ENCODE measurements at regions of chr19 and their contacts with region 1.

Region 1: DNA sequence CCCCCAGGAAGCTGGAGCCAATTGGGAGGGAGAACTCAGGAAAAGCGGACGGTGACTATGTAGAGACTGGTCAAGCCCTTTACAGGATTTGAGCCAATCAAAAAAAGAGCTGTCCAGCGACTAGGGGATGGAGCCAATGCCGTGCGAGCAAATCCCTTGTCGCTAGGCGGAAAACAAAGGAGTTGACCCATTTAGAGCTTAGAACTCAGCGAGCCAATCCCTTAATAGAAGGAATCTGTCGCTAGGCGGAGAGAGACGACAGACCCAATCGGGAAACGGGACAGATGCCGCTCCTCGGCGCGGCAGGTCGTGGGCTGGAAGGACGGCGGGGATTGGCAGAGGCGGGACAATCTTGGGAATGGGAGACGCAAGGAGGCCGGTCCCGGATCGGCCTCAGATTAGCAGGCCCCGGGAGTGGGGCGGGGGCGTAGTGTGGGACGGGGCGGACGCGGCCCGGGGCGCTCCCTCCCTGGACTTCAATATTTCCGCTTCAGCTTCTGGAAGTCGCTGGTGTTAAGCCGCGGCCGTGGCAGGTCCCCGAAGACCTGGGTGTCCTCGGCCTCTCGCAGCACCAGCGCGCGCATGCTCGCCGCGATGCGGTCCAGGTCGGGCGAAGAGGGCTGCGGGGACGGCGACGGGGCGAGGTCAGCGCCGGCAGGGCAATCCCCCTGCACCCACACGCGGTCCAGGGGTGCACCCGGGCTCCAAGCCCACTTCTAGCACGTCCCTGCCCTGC is 2.2 kb upstream of the PNKP start:
- DNase-seq: peak; percentile 98
- H3K4me3 Mint-ChIP-seq: no peak overlapping the region
- H3K27ac Mint-ChIP-seq: no peak overlapping the region
- H3K4me1 Mint-ChIP-seq: peaks cover 41% of the 10 kb centered on the region
- H3K27me3 Mint-ChIP-seq: no peaks in the 10 kb centered on the region

Region 2: DNA sequence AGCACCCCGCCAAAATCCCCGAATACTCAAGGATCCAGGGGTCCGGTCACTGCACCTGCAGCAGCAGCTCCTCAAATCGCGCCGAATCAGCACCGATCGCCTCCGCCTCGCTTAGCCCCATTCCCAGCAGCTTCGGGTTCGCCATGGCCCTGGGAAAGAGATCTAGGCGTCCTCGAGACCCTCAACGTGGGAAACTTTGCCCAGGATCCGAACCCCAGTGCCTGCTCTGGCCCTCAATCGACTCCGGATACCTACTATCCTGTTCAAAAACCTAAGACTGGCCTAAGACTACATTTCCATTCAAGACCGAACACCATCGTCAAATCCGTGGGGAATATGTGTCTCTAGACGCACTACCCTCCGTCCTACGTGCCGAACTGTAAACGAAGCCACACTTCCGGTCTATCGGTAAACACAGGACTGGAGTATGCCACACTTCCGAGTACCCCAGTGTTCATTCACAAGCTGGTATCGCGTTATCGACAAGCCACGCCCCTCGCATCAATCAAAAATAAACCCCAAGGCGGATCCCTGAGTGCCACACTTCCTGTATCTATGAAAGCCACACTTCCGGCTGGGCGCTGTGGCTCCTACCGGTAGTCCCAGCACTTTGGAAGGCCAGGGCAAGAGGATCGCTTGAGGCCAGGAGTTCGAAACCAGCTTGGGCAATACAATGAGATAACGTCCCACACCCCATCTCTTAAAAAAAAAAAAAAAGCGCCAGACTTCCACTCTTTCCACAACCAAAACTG is 418.0 kb before region 1 on chr19 and contains the start of gene PIH1D1:
- intact Hi-C with region 1: no loop called
- DNase-seq: peak; percentile 98
- H3K4me3 Mint-ChIP-seq: peak within 1 kb of the TSS; percentile 91
- H3K27ac Mint-ChIP-seq: peak within 1 kb of the TSS; percentile 100
- H3K4me1 Mint-ChIP-seq: peaks cover 38% of the 10 kb centered on the region
- H3K27me3 Mint-ChIP-seq: no peaks in the 10 kb centered on the region
- total RNA-seq, gene PIH1D1: 134 and 135 TPM in 2 replicates

Region 3: DNA sequence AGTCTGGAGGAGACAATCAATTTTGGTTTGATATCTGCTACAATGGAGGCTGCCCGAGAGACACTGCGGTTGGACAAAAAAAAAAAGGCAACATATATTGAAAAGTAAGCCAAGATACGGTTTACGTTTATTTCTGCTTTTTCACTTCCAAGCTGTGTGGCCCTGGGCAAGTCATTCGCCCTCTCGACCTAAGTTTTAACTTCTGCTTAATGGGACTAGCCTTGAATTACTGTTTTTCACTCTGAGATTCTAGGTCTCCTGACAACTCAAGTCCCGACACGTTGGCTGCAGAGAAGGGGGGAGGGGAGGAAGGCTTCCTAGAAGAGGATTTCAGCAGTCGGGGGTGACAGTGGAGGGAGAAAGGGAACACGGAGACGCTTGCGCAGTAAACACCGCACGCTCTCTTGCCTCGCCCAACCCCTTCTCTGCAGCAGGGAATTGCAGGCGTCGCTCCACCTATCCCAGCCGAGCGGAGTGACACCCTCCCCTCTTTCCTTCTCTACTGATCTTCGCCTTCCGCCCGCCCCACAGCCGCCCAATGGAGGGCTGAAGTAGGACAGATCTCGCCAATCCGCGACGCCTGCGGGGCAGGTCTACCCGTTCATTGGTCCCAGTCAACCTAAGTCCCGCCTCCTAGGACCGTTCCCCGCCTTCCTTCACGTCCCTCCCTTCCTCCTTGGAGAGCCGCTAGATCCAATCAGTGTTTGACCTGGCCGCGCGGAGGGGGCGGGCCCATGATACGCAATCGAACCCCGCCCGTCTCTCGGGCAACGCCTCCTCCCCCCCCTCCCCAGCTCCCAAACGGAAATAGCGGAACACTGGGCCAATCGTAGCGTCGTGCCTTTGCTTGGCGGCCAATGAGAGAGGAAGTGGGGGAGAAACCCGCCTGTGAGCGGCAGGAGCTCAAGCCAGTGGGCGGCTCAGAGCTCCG is 103.3 kb before region 1 on chr19:
- intact Hi-C with region 1: loop called (anchors 2 kb)
- DNase-seq: peak; percentile 100
- H3K4me3 Mint-ChIP-seq: peak overlapping the region; percentile 91
- H3K27ac Mint-ChIP-seq: peak overlapping the region; percentile 92
- H3K4me1 Mint-ChIP-seq: peaks cover 32% of the 10 kb centered on the region
- H3K27me3 Mint-ChIP-seq: no peaks in the 10 kb centered on the region

Region 4: GRCh38 chr19:49850473-49851342 is 18.9 kb before region 1 on chr19 and contains the start of gene PTOV1:
- intact Hi-C with region 1: loop called (anchors 1 kb)
- DNase-seq: peak; percentile 98
- H3K4me3 Mint-ChIP-seq: peak within 1 kb of the TSS; percentile 91
- H3K27ac Mint-ChIP-seq: peak within 1 kb of the TSS; percentile 96
- H3K4me1 Mint-ChIP-seq: peaks cover 38% of the 10 kb centered on the region
- H3K27me3 Mint-ChIP-seq: peaks cover 4% of the 10 kb centered on the region
- total RNA-seq, gene PTOV1: 121 and 124 TPM in 2 replicates

Region 5: GRCh38 chr19:49896863-49897621 is 27.4 kb after region 1 on chr19 and contains the start of gene IL4I1:
- intact Hi-C with region 1: loop called (anchors 1 kb)
- DNase-seq: peak; percentile 88
- H3K4me3 Mint-ChIP-seq: peak within 1 kb of the TSS; percentile 89
- H3K27ac Mint-ChIP-seq: peak within 1 kb of the TSS; percentile 100
- H3K4me1 Mint-ChIP-seq: peaks cover 51% of the 10 kb centered on the region
- H3K27me3 Mint-ChIP-seq: peaks cover 2% of the 10 kb centered on the region
- total RNA-seq, gene IL4I1: 40.4 and 41.4 TPM in 2 replicates

Region 6: GRCh38 chr19:49929611-49930482 is 60.2 kb after region 1 on chr19:
- intact Hi-C with region 1: loop called (anchors 1 kb)
- DNase-seq: peak; percentile 98
- H3K4me3 Mint-ChIP-seq: peak overlapping the region; percentile 97
- H3K27ac Mint-ChIP-seq: peak overlapping the region; percentile 100
- H3K4me1 Mint-ChIP-seq: peaks cover 54% of the 10 kb centered on the region
- H3K27me3 Mint-ChIP-seq: peaks cover 3% of the 10 kb centered on the region

Region 7: DNA sequence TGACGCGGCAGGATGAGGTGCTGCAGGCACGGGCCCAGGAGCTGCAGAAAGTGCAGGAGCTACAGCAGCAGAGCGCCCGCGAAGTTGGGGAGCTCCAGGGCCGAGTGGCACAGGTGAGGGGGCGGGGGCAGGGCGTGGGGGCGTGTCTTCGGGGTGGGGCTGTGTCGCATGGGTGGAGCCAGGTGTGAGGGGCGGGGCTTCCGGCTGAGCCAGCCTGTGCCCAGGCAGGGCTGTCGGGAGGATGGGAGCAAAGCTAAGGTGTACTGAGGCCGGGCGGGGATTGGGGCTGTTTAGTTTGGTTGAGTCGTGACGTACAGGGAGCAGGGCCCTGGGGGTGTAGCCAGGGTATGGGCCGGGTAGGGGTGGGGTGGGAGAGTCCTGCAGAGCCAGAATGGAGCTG is 397.3 kb after region 1 on chr19:
- intact Hi-C with region 1: no loop called
- DNase-seq: peak; percentile 71
- H3K4me3 Mint-ChIP-seq: no peak overlapping the region
- H3K27ac Mint-ChIP-seq: no peak overlapping the region
- H3K4me1 Mint-ChIP-seq: no peaks in the 10 kb centered on the region
- H3K27me3 Mint-ChIP-seq: peaks cover 6% of the 10 kb centered on the region